ENCODE measurements at regions of chr1 and their contacts with region 1.

Region 1: GRCh38 chr1:160193091-160193819 is 2.9 kb downstream of the CASQ1 start:
- DNase-seq: peak; percentile 83 to 95
- ATAC-seq: peak; percentile 92
- H3K4me3 ChIP-seq: no peak overlapping the region
- H3K27ac ChIP-seq: no peak overlapping the region
- H3K4me1 ChIP-seq: no peaks in the 10 kb centered on the region
- H3K27me3 ChIP-seq: no peaks in the 10 kb centered on the region

Region 2: GRCh38 chr1:160117709-160118183 is 75.5 kb before region 1 on chr1:
- intact Hi-C with region 1: loop called in 1 of 2 experiments (anchors 5 kb)
- DNase-seq: no peak
- ATAC-seq: peak; percentile 52
- H3K4me3 ChIP-seq: peak overlapping the region; percentile 6 to 72
- H3K27ac ChIP-seq: peak overlapping the region in 1 of 2 donors; percentile 66
- H3K4me1 ChIP-seq: no peaks in the 10 kb centered on the region
- H3K27me3 ChIP-seq: no peaks in the 10 kb centered on the region

Region 3: DNA sequence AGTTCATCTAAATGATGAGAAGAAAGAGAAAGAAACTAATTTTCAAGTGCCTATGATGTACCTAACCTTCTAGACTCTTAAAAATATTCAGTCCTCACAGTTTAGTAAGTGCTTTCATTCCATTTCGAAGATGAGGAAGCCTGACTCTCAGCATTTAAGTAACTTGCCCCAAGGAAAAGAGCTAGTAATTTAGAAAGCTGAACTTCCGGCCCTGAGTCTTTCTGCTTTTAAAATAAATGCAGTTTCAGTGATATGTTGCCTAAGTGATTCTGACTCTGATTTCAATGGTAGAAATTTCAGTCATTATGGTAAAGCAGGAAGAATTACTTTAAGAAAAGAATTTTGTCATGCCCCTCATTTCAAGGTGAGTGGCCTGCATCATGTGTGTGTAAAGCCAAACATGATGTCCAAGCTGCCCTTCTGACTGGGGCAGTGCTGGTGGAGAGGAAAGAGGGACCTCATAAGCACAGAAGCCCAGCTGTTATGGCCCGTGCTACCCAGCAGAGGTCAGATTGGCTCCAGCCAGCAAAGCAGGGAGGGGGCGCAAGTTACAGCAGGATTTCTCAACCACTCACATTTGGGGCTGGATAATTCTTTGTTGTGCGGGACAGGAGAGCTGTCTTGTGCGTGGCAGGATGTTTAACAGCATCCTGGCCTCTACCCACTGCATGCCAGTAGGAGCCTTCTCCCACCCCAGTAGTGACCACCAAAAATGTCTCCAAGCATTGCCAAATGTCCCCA is 31.1 kb before region 1 on chr1:
- intact Hi-C with region 1: no loop called
- DNase-seq: no peak
- ATAC-seq: peak; percentile 19
- H3K4me3 ChIP-seq: no peak overlapping the region
- H3K27ac ChIP-seq: no peak overlapping the region
- H3K4me1 ChIP-seq: peaks cover 3 to 5% of the 10 kb centered on the region in 2 donors
- H3K27me3 ChIP-seq: no peaks in the 10 kb centered on the region

Region 4: DNA sequence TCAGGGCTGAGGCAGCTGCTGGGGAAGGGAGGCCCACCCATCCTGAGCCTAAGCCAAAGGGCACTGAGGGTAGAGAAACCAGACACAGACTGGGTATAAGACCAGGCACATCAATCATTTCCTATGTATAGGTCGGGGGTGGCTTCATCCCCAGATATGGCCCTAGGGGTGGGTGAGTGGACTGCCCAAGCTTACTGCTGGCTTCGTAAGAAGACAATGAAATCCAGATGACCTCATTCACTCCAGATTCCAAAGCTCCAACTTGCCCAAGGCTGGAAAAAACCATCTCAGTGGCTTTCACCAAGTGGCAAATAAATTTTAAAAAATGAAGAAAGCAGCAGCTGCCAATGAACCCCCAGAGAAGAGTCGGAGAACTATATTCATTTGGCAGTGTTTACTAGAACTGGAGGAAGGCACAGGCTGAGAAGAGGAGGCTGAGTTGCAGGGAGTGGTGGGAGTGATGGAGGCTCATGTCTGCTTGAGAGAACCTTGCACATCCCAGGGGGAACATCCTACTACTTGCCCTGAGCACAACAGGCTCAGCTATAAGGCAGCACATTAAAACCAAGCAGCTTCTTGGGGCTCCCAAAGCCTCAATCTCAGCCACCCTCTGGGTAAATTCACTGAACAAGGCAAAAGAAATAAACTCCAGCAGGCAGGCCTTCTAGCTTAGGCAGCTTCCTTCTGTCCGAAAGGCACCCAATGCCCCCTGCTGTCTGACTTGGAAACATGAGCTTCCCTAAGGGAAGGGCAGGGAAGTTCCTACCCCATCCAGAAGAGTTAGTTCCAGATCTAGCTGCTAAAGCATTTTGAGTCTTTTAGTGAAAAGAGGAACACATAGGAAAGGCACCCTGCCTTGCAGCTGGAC is 26.0 kb after region 1 on chr1:
- intact Hi-C with region 1: loop called (anchors 2 kb)
- DNase-seq: peak in 1 of 2 donors; percentile 67
- ATAC-seq: peak; percentile 80
- H3K4me3 ChIP-seq: no peak overlapping the region
- H3K27ac ChIP-seq: peak overlapping the region in 1 of 2 donors; percentile 73
- H3K4me1 ChIP-seq: peaks cover 0 to 3% of the 10 kb centered on the region in 2 donors
- H3K27me3 ChIP-seq: no peaks in the 10 kb centered on the region

Region 5: GRCh38 chr1:160251687-160252526 is 58.7 kb after region 1 on chr1:
- intact Hi-C with region 1: loop called (anchors 1 to 5 kb)
- DNase-seq: peak in 1 of 2 donors; percentile 68
- ATAC-seq: peak; percentile 91
- H3K4me3 ChIP-seq: no peak overlapping the region
- H3K27ac ChIP-seq: no peak overlapping the region
- H3K4me1 ChIP-seq: no peaks in the 10 kb centered on the region
- H3K27me3 ChIP-seq: no peaks in the 10 kb centered on the region

Region 6: DNA sequence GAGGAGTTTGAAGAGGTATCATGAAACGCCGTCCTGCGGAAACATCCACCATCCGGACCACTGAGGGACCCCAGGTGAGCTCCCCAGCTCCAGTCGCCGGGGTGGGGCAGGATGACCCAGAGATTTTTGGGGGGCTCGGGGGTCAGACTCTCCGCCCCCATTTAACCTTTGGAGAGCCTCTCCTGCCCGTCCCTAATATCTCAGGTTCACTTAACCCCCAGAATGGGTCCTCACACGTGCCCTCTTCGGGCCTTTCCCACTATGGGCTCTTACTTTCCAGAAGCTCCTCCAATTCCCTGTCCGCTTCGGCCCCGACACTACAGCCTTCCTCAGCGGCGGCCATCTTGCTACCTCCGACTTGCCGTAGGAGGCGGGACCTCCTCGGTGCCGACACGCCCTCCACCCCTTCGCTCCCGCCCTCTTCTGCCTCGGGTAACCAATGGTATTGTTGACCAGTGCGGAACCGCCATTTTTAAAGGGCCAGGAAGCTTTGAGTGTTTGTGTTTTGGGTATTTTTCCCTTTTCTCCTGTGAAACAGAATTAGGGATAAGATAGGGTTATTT is 91.6 kb after region 1 on chr1 and contains the start of gene PEX19:
- intact Hi-C with region 1: loop called (anchors 5 kb)
- DNase-seq: peak; percentile 96 to 97
- ATAC-seq: peak; percentile 99
- H3K4me3 ChIP-seq: peak within 1 kb of the TSS; percentile 73 to 83
- H3K27ac ChIP-seq: peak within 1 kb of the TSS in 1 of 2 donors; percentile 58
- H3K4me1 ChIP-seq: peaks cover 0 to 7% of the 10 kb centered on the region in 2 donors
- H3K27me3 ChIP-seq: no peaks in the 10 kb centered on the region
- total RNA-seq, gene PEX19: 44.8 to 55.1 TPM

Region 7: GRCh38 chr1:160291248-160292220 is 98.3 kb after region 1 on chr1:
- intact Hi-C with region 1: loop called (anchors 5 kb)
- DNase-seq: peak in 1 of 2 donors; percentile 61
- ATAC-seq: peak; percentile 83
- H3K4me3 ChIP-seq: no peak overlapping the region
- H3K27ac ChIP-seq: peak overlapping the region in 1 of 2 donors; percentile 25
- H3K4me1 ChIP-seq: no peaks in the 10 kb centered on the region
- H3K27me3 ChIP-seq: no peaks in the 10 kb centered on the region

Measured in aorta (tissue), 5 donors.